ENCODE measurements at regions of chr9 and their contacts with region 1.

Region 1: DNA sequence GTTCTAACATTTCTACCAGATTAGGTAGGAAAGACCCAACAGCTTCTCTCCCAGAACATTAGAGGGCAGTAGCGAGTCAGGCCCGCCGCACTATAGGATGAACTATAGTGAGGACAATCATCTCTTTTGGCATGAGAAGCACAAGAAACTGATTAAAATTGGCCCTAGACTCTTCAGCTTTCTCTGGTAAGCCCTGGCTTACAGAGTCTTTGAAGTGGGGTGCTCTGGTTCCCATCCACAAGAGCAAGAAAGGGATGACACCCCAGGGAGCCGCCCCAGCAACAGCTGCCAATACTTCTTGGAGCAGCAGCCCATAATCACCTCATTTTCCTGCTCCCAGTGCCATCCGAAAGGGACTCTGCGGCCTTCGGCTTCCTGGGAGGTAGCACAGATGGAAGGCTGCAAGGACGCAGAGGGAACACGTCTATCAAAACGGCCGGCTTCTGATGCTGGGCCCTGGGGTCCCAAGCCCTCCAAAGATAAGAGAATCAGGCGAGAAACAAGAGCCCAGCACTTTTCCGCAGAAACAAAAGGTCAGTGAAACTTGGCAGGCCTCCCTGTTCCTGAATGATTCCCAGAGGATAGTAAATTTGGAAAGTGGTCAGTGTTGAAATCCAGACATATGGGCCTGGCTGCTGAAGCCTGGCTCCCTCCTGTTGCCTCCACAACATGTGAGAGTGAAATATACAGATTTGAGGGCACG is 69.3 kb downstream of the HSD17B3 start:
- DNase-seq: no peak
- ATAC-seq: peak; percentile 88
- H3K4me3 ChIP-seq: no peak overlapping the region
- H3K27ac ChIP-seq: no peak overlapping the region
- H3K4me1 ChIP-seq: no peaks in the 10 kb centered on the region
- H3K27me3 ChIP-seq: no peaks in the 10 kb centered on the region

Region 2: GRCh38 chr9:95989297-95989696 is 243.4 kb before region 1 on chr9:
- intact Hi-C with region 1: no loop called
- DNase-seq: no peak
- ATAC-seq: no peak
- H3K4me3 ChIP-seq: no peak overlapping the region
- H3K27ac ChIP-seq: no peak overlapping the region
- H3K4me1 ChIP-seq: no peaks in the 10 kb centered on the region
- H3K27me3 ChIP-seq: no peaks in the 10 kb centered on the region

Region 3: GRCh38 chr9:96317335-96317980 is 84.8 kb after region 1 on chr9:
- intact Hi-C with region 1: loop called (anchors 2 to 5 kb)
- DNase-seq: no peak
- ATAC-seq: peak; percentile 81
- H3K4me3 ChIP-seq: no peak overlapping the region
- H3K27ac ChIP-seq: no peak overlapping the region
- H3K4me1 ChIP-seq: no peaks in the 10 kb centered on the region
- H3K27me3 ChIP-seq: no peaks in the 10 kb centered on the region

Region 4: GRCh38 chr9:96327694-96328352 is 95.1 kb after region 1 on chr9:
- intact Hi-C with region 1: loop called in 1 of 2 experiments (anchors 2 kb)
- DNase-seq: no peak
- ATAC-seq: peak; percentile 86
- H3K4me3 ChIP-seq: no peak overlapping the region
- H3K27ac ChIP-seq: no peak overlapping the region
- H3K4me1 ChIP-seq: no peaks in the 10 kb centered on the region
- H3K27me3 ChIP-seq: no peaks in the 10 kb centered on the region

Region 5: GRCh38 chr9:96661711-96662110 is 429.0 kb after region 1 on chr9:
- intact Hi-C with region 1: loop called in 1 of 2 experiments (anchors 10 kb)
- DNase-seq: no peak
- ATAC-seq: no peak
- H3K4me3 ChIP-seq: no peak overlapping the region
- H3K27ac ChIP-seq: no peak overlapping the region
- H3K4me1 ChIP-seq: no peaks in the 10 kb centered on the region
- H3K27me3 ChIP-seq: no peaks in the 10 kb centered on the region